Esophagus squamous epithelium (tissue), 5 donors: ENCODE measurements at regions of chr11 and their contacts with region 1.

Region 1: GRCh38 chr11:119491753-119492510 is 69.0 kb upstream of the THY1 start:
- DNase-seq: no peak
- H3K4me3 ChIP-seq: no peak overlapping the region
- H3K27ac ChIP-seq: no peak overlapping the region
- H3K4me1 ChIP-seq: no peaks in the 10 kb centered on the region
- H3K27me3 ChIP-seq: peaks cover 0 to 26% (median 0%) of the 10 kb centered on the region in 4 donors
- CTCF ChIP-seq: peak in 2 of 6 experiments; percentile 29 to 35
- POLR2A ChIP-seq: no peak

Region 2: GRCh38 chr11:119538753-119539152 is 46.8 kb after region 1 on chr11:
- intact Hi-C with region 1: no loop called
- DNase-seq: no peak
- H3K4me3 ChIP-seq: no peak overlapping the region
- H3K27ac ChIP-seq: no peak overlapping the region
- H3K4me1 ChIP-seq: peaks cover 3 to 16% (median 5%) of the 10 kb centered on the region in 3 donors
- H3K27me3 ChIP-seq: peaks cover 0 to under 1% (median 0%) of the 10 kb centered on the region in 4 donors
- CTCF ChIP-seq: no peak
- POLR2A ChIP-seq: no peak

Region 3: DNA sequence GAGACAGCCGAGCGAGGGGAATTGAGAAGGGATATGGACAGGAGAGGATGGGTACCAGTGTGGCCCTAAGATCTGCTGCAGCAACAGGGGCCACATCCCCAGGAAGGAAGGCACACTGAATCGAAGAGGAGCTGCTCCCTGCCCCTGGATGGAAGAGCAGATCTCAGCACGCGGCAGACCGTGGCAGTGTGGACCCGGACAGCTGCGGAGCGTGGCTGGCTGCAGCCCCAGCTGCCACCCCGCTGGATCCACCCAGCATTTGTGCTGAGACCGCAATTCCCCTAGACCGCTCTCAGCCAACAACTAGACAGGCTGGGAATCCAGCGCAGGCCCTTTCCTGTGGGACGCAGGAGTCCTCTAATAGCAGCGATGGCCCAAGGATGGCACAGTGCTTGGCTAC is 142.4 kb after region 1 on chr11:
- intact Hi-C with region 1: loop called (anchors 10 kb)
- DNase-seq: no peak
- H3K4me3 ChIP-seq: no peak overlapping the region
- H3K27ac ChIP-seq: no peak overlapping the region
- H3K4me1 ChIP-seq: no peaks in the 10 kb centered on the region
- H3K27me3 ChIP-seq: peaks cover 0 to 20% (median 0%) of the 10 kb centered on the region in 4 donors
- CTCF ChIP-seq: no peak
- POLR2A ChIP-seq: no peak